Pancreas (tissue), 10 donors: ENCODE measurements at regions of chr3 and their contacts with region 1.

Region 1: GRCh38 chr3:32593903-32594525 is 23.4 kb upstream of the DYNC1LI1 start:
- DNase-seq: no peak
- ATAC-seq: no peak
- H3K4me3 ChIP-seq: no peak overlapping the region
- H3K27ac ChIP-seq: no peak overlapping the region
- H3K4me1 ChIP-seq: no peaks in the 10 kb centered on the region
- H3K27me3 ChIP-seq: no peaks in the 10 kb centered on the region
- CTCF ChIP-seq: no peak

Region 2: GRCh38 chr3:32262086-32262600 is 331.9 kb before region 1 on chr3:
- intact Hi-C with region 1: no loop called
- DNase-seq: no peak
- ATAC-seq: no peak
- H3K4me3 ChIP-seq: no peak overlapping the region
- H3K27ac ChIP-seq: no peak overlapping the region
- H3K4me1 ChIP-seq: no peaks in the 10 kb centered on the region
- H3K27me3 ChIP-seq: no peaks in the 10 kb centered on the region
- CTCF ChIP-seq: no peak

Region 3: DNA sequence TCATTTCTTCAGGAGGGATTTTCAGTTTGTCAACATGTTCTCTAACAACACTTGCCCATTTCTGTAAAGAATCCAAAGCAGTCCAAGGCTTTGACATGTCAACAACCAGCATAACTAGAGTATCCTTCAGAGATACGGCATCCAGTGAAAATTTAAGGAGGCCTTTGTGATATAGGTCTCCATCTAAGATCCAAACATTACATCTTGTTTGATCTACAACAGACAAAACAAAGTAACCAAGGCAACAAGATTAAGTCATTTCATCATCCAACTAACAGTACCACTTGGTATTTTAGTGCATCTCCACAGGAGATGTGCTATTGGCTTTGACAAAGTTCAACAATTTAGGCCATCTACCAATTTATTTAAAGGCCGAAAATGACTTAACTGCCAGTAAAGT is 49.1 kb before region 1 on chr3:
- intact Hi-C with region 1: no loop called
- DNase-seq: no peak
- ATAC-seq: no peak
- H3K4me3 ChIP-seq: no peak overlapping the region
- H3K27ac ChIP-seq: no peak overlapping the region
- H3K4me1 ChIP-seq: no peaks in the 10 kb centered on the region
- H3K27me3 ChIP-seq: no peaks in the 10 kb centered on the region
- CTCF ChIP-seq: no peak

Region 4: GRCh38 chr3:32641356-32641755 is 47.3 kb after region 1 on chr3:
- intact Hi-C with region 1: loop called in 1 of 3 experiments (anchors 10 kb)
- DNase-seq: no peak
- ATAC-seq: no peak
- H3K4me3 ChIP-seq: no peak overlapping the region
- H3K27ac ChIP-seq: no peak overlapping the region
- H3K4me1 ChIP-seq: no peaks in the 10 kb centered on the region
- H3K27me3 ChIP-seq: no peaks in the 10 kb centered on the region
- CTCF ChIP-seq: no peak